Pancreas (tissue), 10 donors: ENCODE measurements at regions of chr12 and their contacts with region 1.

Region 1: GRCh38 chr12:93569656-93570551 is 2.6 kb upstream of the SOCS2 start:
- DNase-seq: peak; percentile 75 to 92 (median 83)
- ATAC-seq: peak; percentile 72 to 84 (median 79)
- H3K4me3 ChIP-seq: peak overlapping the region; percentile 66 to 79 (median 72)
- H3K27ac ChIP-seq: peak overlapping the region; percentile 53 to 85 (median 83)
- H3K4me1 ChIP-seq: no peaks in the 10 kb centered on the region
- H3K27me3 ChIP-seq: no peaks in the 10 kb centered on the region
- CTCF ChIP-seq: peak; percentile 38 to 66 (median 64)

Region 2: DNA sequence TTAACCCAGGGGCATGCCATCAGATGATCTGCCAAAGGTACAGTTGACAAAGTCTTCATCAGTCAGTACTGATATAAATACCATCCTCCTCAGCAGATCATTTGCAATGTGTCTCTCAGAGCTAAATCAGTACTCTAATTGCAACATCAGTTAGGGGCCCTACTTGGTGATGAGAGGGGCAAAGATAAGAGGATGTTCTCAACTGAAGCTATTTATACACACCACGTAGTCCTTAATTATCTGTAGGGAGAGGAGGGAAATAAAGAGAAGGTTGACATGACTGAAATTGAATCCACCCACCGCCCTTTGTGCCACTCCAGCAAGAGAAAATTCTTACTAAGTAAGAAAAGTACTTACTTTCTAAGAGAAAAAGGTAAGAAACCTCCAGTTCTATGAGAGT is 350.0 kb before region 1 on chr12:
- intact Hi-C with region 1: no loop called
- DNase-seq: no peak
- ATAC-seq: no peak
- H3K4me3 ChIP-seq: no peak overlapping the region
- H3K27ac ChIP-seq: no peak overlapping the region
- H3K4me1 ChIP-seq: peaks cover 0 to 8% (median 0%) of the 10 kb centered on the region in 3 donors
- H3K27me3 ChIP-seq: no peaks in the 10 kb centered on the region
- CTCF ChIP-seq: no peak

Region 3: DNA sequence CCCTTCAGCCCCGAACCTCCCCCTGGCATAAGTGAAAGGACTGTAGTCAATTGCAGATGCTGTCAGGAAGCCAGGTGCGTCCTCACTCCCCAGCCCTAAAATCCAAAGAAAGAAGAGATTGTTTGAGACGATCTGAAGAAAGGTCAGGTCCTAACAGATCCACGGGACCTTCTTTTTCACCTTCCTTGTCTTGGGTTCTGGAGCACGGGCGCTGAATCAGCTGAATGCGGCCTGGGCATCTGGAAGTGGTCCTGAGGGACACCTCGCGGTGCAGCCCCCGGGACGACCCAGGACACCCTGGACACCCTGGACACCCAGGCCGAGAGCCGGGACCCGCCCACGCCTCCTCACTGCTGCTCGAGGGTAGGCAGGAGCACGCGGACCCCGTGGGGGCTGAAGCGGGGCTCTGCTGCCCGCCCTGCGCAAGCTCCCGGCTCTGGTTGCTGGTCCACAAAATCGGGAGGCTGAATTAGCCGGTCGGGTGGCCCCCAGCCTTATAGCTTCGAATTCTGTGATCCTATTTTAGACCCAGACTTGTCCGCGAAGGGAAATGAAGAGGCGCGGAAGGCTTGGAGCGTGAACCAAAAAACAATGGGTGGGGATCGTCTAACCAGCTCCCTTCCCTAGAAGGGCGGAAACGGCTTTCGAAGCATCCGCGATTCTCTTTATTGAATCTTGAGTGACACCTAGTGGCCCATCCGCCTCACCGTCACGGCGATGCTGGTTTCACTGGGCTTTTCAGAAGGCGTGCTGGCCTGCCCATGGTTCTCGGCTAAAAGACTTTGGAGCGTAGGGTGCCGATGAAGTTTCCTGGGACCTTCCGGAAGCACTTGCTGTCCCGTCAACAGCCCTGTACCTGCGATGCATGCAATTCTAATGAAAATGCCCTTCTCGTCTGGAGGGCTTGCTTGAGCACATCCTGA is 532.1 kb after region 1 on chr12:
- intact Hi-C with region 1: loop called (anchors 5 to 10 kb)
- DNase-seq: peak; percentile 65 to 89 (median 80)
- ATAC-seq: peak; percentile 91 to 96 (median 94)
- H3K4me3 ChIP-seq: peak overlapping the region; percentile 31 to 67 (median 45)
- H3K27ac ChIP-seq: no peak overlapping the region
- H3K4me1 ChIP-seq: no peaks in the 10 kb centered on the region
- H3K27me3 ChIP-seq: peaks cover 0 to 2% (median 0%) of the 10 kb centered on the region in 4 donors
- CTCF ChIP-seq: peak; percentile 46 to 75 (median 60)